ENCODE measurements at regions of chr14 and their contacts with region 1.

Region 1: DNA sequence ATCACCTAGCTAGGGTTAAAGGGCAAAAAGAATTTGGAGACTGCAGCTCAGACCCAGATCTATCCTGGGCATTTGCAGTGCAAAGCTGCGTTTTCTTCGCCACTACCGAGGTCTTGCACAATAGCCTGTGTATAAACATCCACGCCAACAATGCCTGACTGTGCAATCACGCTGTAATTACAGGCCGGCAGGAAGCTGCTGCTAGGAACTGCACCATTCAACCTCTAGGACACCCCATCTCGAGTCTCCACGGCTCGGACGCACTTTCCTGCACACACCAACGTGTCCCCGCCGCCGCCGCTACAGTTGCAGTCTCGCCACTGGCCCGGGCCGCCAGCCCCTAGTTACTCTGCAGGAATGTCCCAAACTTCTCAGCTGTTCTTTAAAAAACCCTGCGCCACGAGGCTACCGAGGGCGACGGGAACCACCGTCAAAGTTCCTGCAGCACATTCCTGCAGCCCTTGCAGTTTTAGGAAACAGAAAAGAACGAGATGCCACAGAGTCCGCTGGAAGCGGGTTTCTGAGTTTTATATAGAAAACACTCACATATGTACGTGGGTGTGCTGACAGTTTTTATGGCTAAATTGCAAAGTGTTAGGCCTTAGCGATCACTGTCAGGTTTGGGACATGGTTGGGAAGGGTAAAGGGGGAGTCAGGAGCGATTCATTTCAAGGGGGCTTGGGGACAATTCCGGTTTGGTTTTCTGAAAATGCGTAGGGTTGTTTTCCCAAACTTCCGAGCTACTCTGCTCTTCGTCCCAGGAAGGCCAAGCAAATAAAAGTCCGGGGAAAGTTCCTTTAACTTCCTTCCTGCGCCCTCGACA is 65.5 kb upstream of the PTGR2 start:
- DNase-seq: peak; percentile 64
- H3K4me3 Mint-ChIP-seq: peak overlapping the region; percentile 88
- H3K27ac Mint-ChIP-seq: peak overlapping the region; percentile 87
- H3K4me1 Mint-ChIP-seq: peaks cover 60% of the 10 kb centered on the region
- H3K27me3 Mint-ChIP-seq: no peaks in the 10 kb centered on the region

Region 2: GRCh38 chr14:73713803-73714655 is 72.1 kb before region 1 on chr14 and contains the start of gene PNMA1:
- intact Hi-C with region 1: loop called (anchors 2 kb)
- DNase-seq: peak; percentile 85
- H3K4me3 Mint-ChIP-seq: peak within 1 kb of the TSS; percentile 86
- H3K27ac Mint-ChIP-seq: peak within 1 kb of the TSS; percentile 92
- H3K4me1 Mint-ChIP-seq: peaks cover 16% of the 10 kb centered on the region
- H3K27me3 Mint-ChIP-seq: no peaks in the 10 kb centered on the region
- total RNA-seq, gene PNMA1: 30.1 and 32.1 TPM in 2 replicates

Region 3: GRCh38 chr14:73741386-73741875 is 44.7 kb before region 1 on chr14:
- intact Hi-C with region 1: loop called (anchors 1 kb)
- DNase-seq: peak; percentile 75
- H3K4me3 Mint-ChIP-seq: peak overlapping the region; percentile 72
- H3K27ac Mint-ChIP-seq: peak overlapping the region; percentile 80
- H3K4me1 Mint-ChIP-seq: peaks cover 63% of the 10 kb centered on the region
- H3K27me3 Mint-ChIP-seq: no peaks in the 10 kb centered on the region

Region 4: GRCh38 chr14:73759714-73760597 is 26.1 kb before region 1 on chr14:
- intact Hi-C with region 1: loop called (anchors 1 kb)
- DNase-seq: peak; percentile 95
- H3K4me3 Mint-ChIP-seq: peak overlapping the region; percentile 83
- H3K27ac Mint-ChIP-seq: peak overlapping the region; percentile 94
- H3K4me1 Mint-ChIP-seq: peaks cover 75% of the 10 kb centered on the region
- H3K27me3 Mint-ChIP-seq: no peaks in the 10 kb centered on the region

Region 5: DNA sequence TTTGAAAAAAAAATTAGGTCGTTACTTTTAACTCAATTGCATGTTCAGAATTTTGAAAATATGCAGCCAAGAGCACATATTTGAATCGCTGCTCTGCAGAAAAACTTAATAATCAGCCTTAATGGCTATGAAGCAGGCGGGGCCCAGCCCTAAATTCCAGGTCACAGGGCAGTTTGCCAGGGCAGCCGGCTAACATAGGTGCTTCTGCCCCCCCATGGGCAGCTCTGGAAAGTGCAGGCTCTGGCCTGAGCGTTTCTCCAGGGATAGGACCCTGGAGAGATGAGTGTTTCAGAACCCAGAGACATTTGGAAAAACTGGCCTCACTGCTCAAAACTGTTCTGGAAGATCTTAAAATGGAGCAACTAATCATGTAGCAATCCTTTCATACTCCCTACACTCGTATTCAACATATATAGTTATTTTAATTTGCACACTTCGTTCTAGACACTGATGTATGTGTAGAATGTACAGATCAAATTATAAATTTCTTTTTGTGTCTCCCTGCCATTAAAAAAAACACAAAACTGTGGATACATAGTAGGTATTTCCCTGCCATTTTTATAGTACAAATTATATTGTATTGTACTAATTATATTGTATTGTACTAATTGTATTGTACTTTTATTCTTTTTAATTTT is 39.6 kb after region 1 on chr14:
- intact Hi-C with region 1: loop called (anchors 2 kb)
- DNase-seq: peak; percentile 52
- H3K4me3 Mint-ChIP-seq: no peak overlapping the region
- H3K27ac Mint-ChIP-seq: no peak overlapping the region
- H3K4me1 Mint-ChIP-seq: peaks cover 23% of the 10 kb centered on the region
- H3K27me3 Mint-ChIP-seq: peaks cover 11% of the 10 kb centered on the region

Region 6: GRCh38 chr14:73886449-73887317 is 100.6 kb after region 1 on chr14 and contains the start of gene ZNF410:
- intact Hi-C with region 1: loop called (anchors 1 kb)
- DNase-seq: peak; percentile 84
- H3K4me3 Mint-ChIP-seq: peak within 1 kb of the TSS; percentile 84
- H3K27ac Mint-ChIP-seq: peak within 1 kb of the TSS; percentile 98
- H3K4me1 Mint-ChIP-seq: peaks cover 39% of the 10 kb centered on the region
- H3K27me3 Mint-ChIP-seq: no peaks in the 10 kb centered on the region
- total RNA-seq, gene ZNF410: 77.5 and 82.9 TPM in 2 replicates